Aorta (tissue), 5 donors: ENCODE measurements at regions of chr12 and their contacts with region 1.

Region 1: DNA sequence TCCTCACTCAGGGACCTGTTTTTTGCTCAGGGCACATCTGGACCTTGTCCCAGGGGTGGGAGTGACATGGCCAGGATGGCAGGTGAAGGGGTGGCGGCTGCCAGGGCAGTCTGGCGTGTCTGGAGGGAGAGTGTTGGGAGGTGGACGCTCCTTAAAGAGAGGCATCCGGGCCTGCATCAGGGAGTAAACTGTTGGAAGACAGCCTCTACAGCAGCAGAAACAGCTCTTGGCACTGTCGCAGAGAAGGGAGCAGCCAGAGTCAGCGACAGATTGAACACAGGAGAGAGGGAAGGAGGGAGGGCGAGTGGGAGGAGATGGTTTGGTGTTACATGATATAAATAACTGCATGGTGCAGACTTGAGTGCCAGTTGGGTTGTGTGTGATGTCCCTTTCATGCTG is 52.8 kb downstream of the IGF1 start:
- DNase-seq: peak; percentile 61 to 71
- ATAC-seq: peak; percentile 47
- H3K4me3 ChIP-seq: no peak overlapping the region
- H3K27ac ChIP-seq: peak overlapping the region; percentile 48 to 69
- H3K4me1 ChIP-seq: peaks cover 0 to 3% of the 10 kb centered on the region in 2 donors
- H3K27me3 ChIP-seq: no peaks in the 10 kb centered on the region

Region 2: DNA sequence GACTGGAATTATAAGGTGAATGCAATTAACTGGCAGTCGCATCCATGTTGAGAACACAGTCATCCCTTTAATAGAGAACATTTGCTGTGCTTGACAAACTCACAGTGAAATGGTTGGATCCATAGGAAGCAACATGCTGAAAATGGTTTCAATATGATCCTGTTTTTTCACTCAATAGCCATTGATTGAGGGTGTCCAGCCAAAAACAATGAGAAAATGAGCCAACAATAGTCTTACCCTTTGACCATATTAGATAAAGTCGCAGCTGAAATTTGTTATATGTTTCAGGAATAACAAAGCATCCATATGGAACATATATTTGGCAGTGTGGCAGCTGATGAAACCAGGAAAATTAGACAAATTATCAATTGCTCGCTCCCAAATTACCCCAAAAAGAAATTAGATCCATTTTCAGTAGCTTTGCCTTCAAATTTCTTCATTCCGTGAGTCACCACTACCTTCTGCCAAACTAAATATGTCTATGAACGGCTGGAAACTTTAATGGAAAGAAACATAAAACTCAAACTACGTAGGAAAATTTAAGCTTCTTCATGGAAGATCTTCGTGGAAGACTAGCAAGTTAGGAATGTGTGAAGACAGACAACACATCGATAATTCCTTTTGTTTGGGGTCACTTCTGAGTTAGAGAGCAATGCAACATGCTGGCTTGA is 35.4 kb after region 1 on chr12:
- intact Hi-C with region 1: loop called (anchors 5 kb)
- DNase-seq: no peak
- ATAC-seq: peak; percentile 56
- H3K4me3 ChIP-seq: peak overlapping the region in 1 of 2 donors; percentile 11
- H3K27ac ChIP-seq: peak overlapping the region in 1 of 2 donors; percentile 32
- H3K4me1 ChIP-seq: peaks cover 2 to 4% of the 10 kb centered on the region in 2 donors
- H3K27me3 ChIP-seq: no peaks in the 10 kb centered on the region